ENCODE measurements at regions of chr4 and their contacts with region 1.

Region 1: DNA sequence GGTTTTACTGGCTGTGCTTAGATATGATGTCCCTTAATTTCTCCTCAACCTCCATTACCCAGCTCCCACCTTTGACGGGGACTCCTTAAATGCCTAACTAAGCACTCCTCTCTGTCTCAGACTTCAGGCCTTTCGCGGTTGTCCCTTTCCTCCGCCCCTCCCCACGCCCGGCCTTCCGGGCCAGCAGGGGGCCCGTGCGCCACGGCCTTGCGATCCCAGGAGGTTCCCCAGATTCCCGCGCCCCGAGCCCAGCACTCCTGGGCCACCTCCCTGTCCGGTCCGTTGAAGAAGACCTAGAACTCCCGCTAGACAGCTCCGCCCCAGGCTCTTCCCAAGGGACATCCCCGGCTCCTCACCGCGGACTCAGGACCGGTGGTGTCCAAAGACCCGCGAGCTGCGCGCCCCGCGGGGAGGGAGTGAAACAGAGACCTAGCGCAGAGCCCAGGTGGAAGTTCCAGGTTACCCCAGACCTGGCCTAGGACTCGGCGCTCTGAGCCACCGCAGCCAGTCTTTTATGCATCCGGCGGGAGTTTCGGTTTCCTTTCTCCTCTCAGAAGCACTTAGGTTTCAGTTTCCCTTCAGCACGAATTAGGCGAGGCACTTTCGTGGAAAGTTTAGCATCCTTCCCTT is at the start of gene DDX60:
- DNase-seq: peak; percentile 69 to 94 (median 83)
- ATAC-seq: peak; percentile 92
- H3K4me3 ChIP-seq: peak within 1 kb of the TSS; percentile 94
- H3K4me3 Mint-ChIP-seq: peak within 1 kb of the TSS; percentile 99
- H3K27ac ChIP-seq: peak within 1 kb of the TSS; percentile 94 to 97
- H3K27ac Mint-ChIP-seq: peak within 1 kb of the TSS; percentile 100
- H3K4me1 ChIP-seq: peaks cover 12% of the 10 kb centered on the region
- H3K4me1 Mint-ChIP-seq: peaks cover 67% of the 10 kb centered on the region
- H3K27me3 ChIP-seq: no peaks in the 10 kb centered on the region
- H3K27me3 Mint-ChIP-seq: no peaks in the 10 kb centered on the region
- CTCF ChIP-seq: no peak
- total RNA-seq, gene DDX60: 11.9 to 12.2 TPM

Region 2: DNA sequence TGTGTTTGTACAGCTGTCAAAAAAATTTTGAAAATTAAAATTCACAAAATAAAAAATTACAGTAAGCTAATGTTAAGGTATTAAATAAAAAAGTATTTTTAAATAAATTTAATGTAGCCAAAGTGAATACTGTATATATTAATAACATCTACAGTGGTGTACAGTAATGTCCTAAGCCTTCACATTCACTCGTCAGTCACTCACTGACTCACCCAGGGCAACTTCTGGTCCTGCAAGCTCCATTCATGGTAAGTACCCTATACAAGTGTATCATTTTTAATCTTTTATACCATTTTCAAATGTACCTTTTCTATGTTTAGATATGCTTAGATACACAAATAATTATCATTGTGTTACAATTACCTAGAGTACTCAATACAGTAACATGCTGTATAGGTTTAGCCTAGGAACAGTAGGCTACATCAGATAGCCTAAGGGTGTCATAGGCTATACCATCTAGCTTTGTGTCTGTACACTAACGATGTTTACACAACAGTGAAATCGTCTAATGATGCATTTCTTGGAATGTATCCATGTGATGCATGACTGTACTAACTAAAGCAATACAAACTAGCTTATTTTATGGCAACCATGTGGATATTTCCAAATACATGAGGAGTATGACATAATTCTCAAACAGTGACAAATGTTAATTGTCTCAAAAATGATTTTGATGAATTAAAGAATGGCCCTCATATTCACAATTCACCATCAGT is 13.5 kb before region 1 on chr4:
- CTCF ChIA-PET with region 1: interaction called, 6 read pairs
- POLR2A ChIA-PET with region 1: interaction called, 10 read pairs
- intact Hi-C with region 1: no loop called
- DNase-seq: no peak
- ATAC-seq: no peak
- H3K4me3 ChIP-seq: no peak overlapping the region
- H3K4me3 Mint-ChIP-seq: no peak overlapping the region
- H3K27ac ChIP-seq: no peak overlapping the region
- H3K27ac Mint-ChIP-seq: no peak overlapping the region
- H3K4me1 ChIP-seq: no peaks in the 10 kb centered on the region
- H3K4me1 Mint-ChIP-seq: peaks cover 23% of the 10 kb centered on the region
- H3K27me3 ChIP-seq: no peaks in the 10 kb centered on the region
- H3K27me3 Mint-ChIP-seq: no peaks in the 10 kb centered on the region
- CTCF ChIP-seq: no peak

Region 3: GRCh38 chr4:168480931-168481611 is 162.7 kb after region 1 on chr4:
- CTCF ChIA-PET with region 1: no interaction called
- POLR2A ChIA-PET with region 1: interaction called, 43 read pairs
- intact Hi-C with region 1: loop called (anchors 1 to 2 kb)
- DNase-seq: peak; percentile 12 to 87 (median 34)
- ATAC-seq: peak; percentile 68
- H3K4me3 ChIP-seq: peak overlapping the region; percentile 84
- H3K4me3 Mint-ChIP-seq: peak overlapping the region; percentile 99
- H3K27ac ChIP-seq: peak overlapping the region; percentile 78 to 86
- H3K27ac Mint-ChIP-seq: peak overlapping the region; percentile 97
- H3K4me1 ChIP-seq: peaks cover 20% of the 10 kb centered on the region
- H3K4me1 Mint-ChIP-seq: peaks cover 78% of the 10 kb centered on the region
- H3K27me3 ChIP-seq: no peaks in the 10 kb centered on the region
- H3K27me3 Mint-ChIP-seq: no peaks in the 10 kb centered on the region
- CTCF ChIP-seq: no peak

Region 4: DNA sequence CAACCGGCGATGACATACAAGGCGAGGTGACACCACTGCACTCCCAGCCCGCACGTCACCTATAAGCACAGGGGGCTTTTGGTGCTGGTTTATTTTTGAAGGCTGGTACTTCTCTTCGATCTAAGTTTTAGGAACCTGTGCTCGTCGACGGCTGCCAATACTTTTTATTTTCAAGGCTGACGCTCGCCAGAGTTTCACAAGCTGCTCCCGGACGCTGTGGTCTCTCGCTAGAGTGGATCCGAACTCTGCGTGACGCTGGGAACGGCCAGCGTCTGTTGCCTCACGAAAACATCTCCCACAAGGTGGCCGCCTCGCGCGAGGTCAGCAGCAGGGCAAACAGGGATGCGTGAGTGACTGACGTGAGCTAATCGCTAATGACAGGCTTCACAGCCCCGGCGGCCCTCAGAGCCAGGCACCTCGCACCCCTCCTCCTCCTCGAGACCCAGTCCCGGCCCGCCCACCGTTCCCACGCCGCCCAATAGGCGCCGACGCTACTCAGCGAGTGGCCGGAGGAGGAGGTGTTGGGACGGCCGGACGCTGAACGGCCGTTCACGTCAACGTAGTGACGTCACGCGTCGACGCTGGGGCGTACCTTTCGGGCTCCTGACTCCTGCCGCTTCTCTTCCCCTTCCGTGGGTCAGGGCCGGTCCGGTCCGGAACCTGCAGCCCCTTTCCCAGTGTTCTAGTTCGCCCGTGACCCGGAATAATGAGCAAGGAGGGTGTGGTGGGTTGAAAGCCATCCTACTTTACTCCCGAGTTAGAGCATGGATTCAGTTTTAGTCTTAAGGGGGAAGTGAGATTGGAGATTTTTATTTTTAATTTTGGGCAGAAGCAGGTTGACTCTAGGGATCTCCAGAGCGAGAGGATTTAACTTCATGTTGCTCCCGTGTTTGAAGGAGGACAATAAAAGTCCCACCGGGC is 1301.8 kb after region 1 on chr4 and contains the start of gene CLCN3:
- CTCF ChIA-PET with region 1: no interaction called
- POLR2A ChIA-PET with region 1: no interaction called
- intact Hi-C with region 1: loop called in 1 of 2 experiments (anchors 10 kb)
- DNase-seq: peak; percentile 72 to 94 (median 87)
- ATAC-seq: peak; percentile 65
- H3K4me3 ChIP-seq: peak within 1 kb of the TSS; percentile 91
- H3K4me3 Mint-ChIP-seq: peak within 1 kb of the TSS; percentile 98
- H3K27ac ChIP-seq: peak within 1 kb of the TSS; percentile 94 to 96
- H3K27ac Mint-ChIP-seq: peak within 1 kb of the TSS; percentile 98
- H3K4me1 ChIP-seq: peaks cover 19% of the 10 kb centered on the region
- H3K4me1 Mint-ChIP-seq: peaks cover 74% of the 10 kb centered on the region
- H3K27me3 ChIP-seq: no peaks in the 10 kb centered on the region
- H3K27me3 Mint-ChIP-seq: no peaks in the 10 kb centered on the region
- CTCF ChIP-seq: no peak
- total RNA-seq, gene CLCN3: 9.0 to 9.2 TPM

Region 5: GRCh38 chr4:169757575-169758184 is 1439.3 kb after region 1 on chr4 and contains the start of gene HPF1:
- CTCF ChIA-PET with region 1: no interaction called
- POLR2A ChIA-PET with region 1: no interaction called
- intact Hi-C with region 1: loop called in 1 of 2 experiments (anchors 5 kb)
- DNase-seq: peak; percentile 83 to 99 (median 92)
- ATAC-seq: peak; percentile 97
- H3K4me3 ChIP-seq: peak within 1 kb of the TSS; percentile 83
- H3K4me3 Mint-ChIP-seq: peak within 1 kb of the TSS; percentile 85
- H3K27ac ChIP-seq: peak within 1 kb of the TSS; percentile 23 to 29
- H3K27ac Mint-ChIP-seq: peak within 1 kb of the TSS; percentile 26
- H3K4me1 ChIP-seq: peaks cover 17% of the 10 kb centered on the region
- H3K4me1 Mint-ChIP-seq: peaks cover 33% of the 10 kb centered on the region
- H3K27me3 ChIP-seq: no peaks in the 10 kb centered on the region
- H3K27me3 Mint-ChIP-seq: no peaks in the 10 kb centered on the region
- CTCF ChIP-seq: no peak
- total RNA-seq, gene HPF1: 4.4 to 4.8 TPM

Region 6: GRCh38 chr4:170027181-170027829 is 1708.9 kb after region 1 on chr4:
- CTCF ChIA-PET with region 1: no interaction called
- POLR2A ChIA-PET with region 1: no interaction called
- intact Hi-C with region 1: loop called in 1 of 2 experiments (anchors 10 kb)
- DNase-seq: peak; percentile 74 to 95 (median 86)
- ATAC-seq: peak; percentile 77
- H3K4me3 ChIP-seq: peak overlapping the region; percentile 87
- H3K4me3 Mint-ChIP-seq: peak overlapping the region; percentile 94
- H3K27ac ChIP-seq: no peak overlapping the region
- H3K27ac Mint-ChIP-seq: peak overlapping the region; percentile 70
- H3K4me1 ChIP-seq: peaks cover 19% of the 10 kb centered on the region
- H3K4me1 Mint-ChIP-seq: peaks cover 9% of the 10 kb centered on the region
- H3K27me3 ChIP-seq: peaks cover 0 to 14% of the 10 kb centered on the region in 2 experiments
- H3K27me3 Mint-ChIP-seq: peaks cover 22% of the 10 kb centered on the region
- CTCF ChIP-seq: no peak

Measured in CD4-positive, alpha-beta T cell (primary cell).